ENCODE measurements at regions of chr19 and their contacts with region 1.

Region 1: DNA sequence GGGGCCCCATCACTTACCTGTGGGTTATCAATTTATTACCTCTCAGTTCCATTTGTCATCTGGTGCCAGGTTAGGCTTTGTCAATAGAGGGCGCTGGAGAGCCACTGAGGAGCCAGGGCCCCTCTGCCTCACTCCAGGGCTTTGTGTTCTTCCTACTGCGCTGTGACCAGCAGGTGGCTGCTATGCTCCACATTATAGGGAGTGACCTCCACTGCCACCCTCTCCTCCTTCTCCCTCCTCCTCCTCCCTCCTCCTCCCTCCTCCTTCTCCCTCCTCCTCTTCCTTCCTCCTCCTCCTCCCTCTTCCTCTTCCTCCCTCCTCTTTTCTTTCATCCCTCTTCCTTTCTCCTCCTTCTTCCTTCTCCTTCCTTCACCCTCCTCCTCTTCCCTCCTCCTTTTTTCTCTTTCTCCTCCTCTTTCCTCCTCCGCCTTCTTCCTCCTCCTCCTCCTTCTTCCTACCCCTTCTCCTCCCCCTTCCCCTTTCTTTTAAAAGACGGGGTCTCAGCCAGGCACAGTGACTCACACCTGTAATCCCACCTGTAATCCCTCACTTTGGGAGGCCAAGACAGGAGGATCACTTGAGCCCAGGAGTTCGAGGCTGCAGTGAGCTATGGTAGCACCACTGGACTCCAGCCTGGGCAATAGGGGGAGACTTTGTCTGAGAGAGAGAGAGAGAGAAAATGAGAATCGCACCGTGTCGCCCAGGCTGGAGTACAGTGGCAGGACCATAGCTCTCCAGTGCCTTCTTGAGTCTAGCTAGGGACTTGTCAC is 10.3 kb upstream of the ZBTB32 start:
- DNase-seq: peak; percentile 68
- H3K4me3 ChIP-seq: no peak overlapping the region
- H3K27ac ChIP-seq: no peak overlapping the region
- H3K4me1 ChIP-seq: no peaks in the 10 kb centered on the region
- H3K27me3 ChIP-seq: no peaks in the 10 kb centered on the region
- CTCF ChIP-seq: peak; percentile 98

Region 2: DNA sequence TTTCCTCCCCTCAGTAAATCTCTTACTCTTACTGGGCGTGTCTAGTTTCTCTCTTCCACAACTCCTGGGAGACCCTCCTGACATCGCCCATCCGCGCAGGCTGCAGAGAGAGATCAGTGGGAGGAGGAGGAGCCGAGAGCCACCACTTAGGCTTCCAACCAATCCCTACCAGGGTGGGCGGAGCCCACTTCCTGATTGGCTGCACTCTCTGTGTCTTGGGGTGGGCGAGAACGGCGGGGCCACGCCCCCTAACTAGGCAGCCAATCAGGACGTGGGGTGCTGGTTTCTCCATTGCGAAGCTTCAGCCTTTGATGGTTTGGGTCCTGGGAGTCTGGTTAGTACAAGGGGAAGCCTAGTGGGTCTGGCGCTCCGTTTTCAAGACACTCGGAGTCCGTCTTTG is 108.2 kb before region 1 on chr19 and contains the start of gene PMIS2:
- CTCF ChIA-PET with region 1: no interaction called
- dilution Hi-C with region 1: loop called (anchors 5 kb)
- in situ Hi-C with region 1: no loop called
- intact Hi-C with region 1: no loop called
- DNase-seq: no peak
- H3K4me3 ChIP-seq: no peak within 1 kb of the TSS
- H3K27ac ChIP-seq: no peak within 1 kb of the TSS
- H3K4me1 ChIP-seq: no peaks in the 10 kb centered on the region
- H3K27me3 ChIP-seq: no peaks in the 10 kb centered on the region
- CTCF ChIP-seq: no peak
- total RNA-seq, gene PMIS2: not detected

Region 3: DNA sequence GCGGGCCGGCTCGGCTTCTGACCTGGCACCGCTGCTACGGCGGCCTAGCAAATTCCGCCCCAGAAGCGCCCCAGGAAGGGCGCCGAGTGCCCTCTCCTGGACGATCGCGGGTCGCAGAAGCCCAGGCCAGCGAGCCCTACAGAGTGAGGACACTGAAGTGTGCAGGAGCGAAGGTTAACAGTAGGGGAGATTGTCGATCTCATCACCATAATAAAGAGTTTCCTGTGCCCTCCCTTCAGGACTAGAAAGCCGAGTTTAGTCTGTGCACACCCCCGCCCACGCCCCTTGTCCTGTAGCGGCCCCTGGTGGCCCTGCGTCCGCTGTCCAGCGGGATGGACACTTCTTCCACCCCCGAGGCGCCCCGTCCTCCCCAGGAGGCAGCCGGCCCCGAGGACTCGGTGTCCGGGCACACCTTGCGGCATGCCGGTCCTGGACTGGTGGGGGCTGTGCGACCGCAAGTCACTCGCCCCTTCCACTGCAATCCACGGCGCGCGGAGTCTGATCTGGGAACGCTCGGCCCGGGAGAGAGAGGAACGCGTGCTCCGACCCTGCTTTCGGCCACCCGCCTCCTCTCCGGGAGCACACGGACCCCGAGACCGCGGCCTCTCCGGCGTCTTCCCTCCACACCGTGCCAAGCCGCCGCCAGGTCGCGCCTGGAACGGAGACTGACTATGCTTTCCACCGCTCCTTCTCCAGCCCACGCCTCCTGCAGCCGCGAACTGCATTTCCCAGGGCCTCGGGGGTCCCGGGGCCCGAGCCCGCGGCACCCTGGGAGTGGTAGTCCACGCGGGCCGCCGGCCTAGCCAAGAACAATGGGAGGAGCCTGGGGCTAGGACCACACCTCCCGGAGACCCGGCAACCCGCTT is 23.0 kb after region 1 on chr19:
- CTCF ChIA-PET with region 1: no interaction called
- dilution Hi-C with region 1: no loop called
- in situ Hi-C with region 1: no loop called
- intact Hi-C with region 1: loop called (anchors 1 kb)
- DNase-seq: peak; percentile 79
- H3K4me3 ChIP-seq: peak overlapping the region; percentile 90 to 94 (median 91)
- H3K27ac ChIP-seq: peak overlapping the region; percentile 52
- H3K4me1 ChIP-seq: peaks cover 23% of the 10 kb centered on the region
- H3K27me3 ChIP-seq: no peaks in the 10 kb centered on the region
- CTCF ChIP-seq: peak; percentile 55 to 79

Region 4: DNA sequence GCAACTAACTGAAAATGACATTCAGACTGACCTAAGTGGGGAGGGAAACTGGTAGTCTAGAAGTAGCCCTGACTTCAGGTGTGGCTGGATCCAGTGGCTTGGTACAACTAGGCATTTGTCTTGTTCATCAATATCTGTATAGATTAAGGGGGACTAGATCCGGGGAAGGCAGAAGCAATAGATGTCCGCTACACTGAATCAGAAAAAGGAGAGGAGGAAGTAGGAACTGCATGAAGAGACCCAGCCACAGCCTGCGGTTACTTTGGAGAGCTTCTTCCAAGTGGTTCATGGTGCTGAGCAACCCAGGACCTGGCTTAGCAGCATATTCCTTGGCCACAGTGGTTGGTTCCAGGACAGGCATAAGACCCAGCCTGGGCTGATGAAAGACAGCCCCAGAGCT is 128.6 kb after region 1 on chr19:
- CTCF ChIA-PET with region 1: no interaction called
- dilution Hi-C with region 1: no loop called
- in situ Hi-C with region 1: no loop called
- intact Hi-C with region 1: loop called (anchors 1 kb)
- DNase-seq: no peak
- H3K4me3 ChIP-seq: no peak overlapping the region
- H3K27ac ChIP-seq: no peak overlapping the region
- H3K4me1 ChIP-seq: no peaks in the 10 kb centered on the region
- H3K27me3 ChIP-seq: no peaks in the 10 kb centered on the region
- CTCF ChIP-seq: no peak

Region 5: GRCh38 chr19:35882114-35882832 is 188.3 kb after region 1 on chr19:
- CTCF ChIA-PET with region 1: no interaction called
- dilution Hi-C with region 1: no loop called
- in situ Hi-C with region 1: no loop called
- intact Hi-C with region 1: loop called (anchors 2 kb)
- DNase-seq: peak; percentile 66
- H3K4me3 ChIP-seq: no peak overlapping the region
- H3K27ac ChIP-seq: no peak overlapping the region
- H3K4me1 ChIP-seq: no peaks in the 10 kb centered on the region
- H3K27me3 ChIP-seq: no peaks in the 10 kb centered on the region
- CTCF ChIP-seq: peak; percentile 39 to 58